ENCODE measurements at regions of chr2 and their contacts with region 1.

Region 1: DNA sequence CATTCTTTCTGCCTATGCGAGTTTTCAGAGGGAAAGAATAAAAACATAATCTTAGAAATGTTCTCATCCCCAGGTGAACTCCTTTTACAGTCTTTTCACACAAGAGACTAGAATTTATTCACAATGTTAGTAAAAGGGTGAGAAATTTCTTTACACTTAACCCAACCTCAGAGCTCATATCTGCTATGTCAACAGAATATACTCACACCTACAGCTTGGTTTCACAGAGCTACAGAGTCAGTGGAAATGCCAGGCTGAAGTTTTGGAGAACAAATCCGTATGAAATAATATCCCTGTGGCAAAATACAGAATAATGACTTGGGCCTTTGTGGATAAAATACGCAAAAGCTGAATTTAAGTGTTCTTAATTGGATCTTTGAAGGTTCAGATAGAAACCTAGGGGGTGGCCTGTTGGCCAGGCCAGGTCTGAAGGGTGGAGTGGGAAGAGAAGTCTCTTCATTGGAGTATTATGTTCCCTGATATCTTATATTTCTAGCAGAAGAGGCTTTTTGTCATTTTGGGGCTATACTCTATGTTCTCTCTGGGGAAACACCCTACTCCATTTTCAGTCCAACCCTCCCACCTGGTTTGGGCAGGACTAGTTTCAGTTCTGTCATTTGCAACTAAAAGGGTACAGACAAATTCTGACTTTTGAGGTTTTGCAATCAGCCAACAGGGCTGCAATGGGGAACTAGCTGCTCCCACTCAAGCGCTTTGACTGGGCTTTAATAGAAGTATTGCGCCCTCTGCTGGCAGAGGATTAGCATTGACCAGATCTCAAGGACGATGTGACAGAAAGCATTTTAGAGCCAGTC is 25.7 kb downstream of the FBXO48 start:
- DNase-seq: peak; percentile 68 to 82
- H3K4me3 ChIP-seq: no peak overlapping the region
- H3K27ac ChIP-seq: no peak overlapping the region
- H3K4me1 ChIP-seq: no peaks in the 10 kb centered on the region
- H3K27me3 ChIP-seq: no peaks in the 10 kb centered on the region
- CTCF ChIP-seq: peak; percentile 76 to 91 (median 83)
- POLR2A ChIP-seq: no peak

Region 2: DNA sequence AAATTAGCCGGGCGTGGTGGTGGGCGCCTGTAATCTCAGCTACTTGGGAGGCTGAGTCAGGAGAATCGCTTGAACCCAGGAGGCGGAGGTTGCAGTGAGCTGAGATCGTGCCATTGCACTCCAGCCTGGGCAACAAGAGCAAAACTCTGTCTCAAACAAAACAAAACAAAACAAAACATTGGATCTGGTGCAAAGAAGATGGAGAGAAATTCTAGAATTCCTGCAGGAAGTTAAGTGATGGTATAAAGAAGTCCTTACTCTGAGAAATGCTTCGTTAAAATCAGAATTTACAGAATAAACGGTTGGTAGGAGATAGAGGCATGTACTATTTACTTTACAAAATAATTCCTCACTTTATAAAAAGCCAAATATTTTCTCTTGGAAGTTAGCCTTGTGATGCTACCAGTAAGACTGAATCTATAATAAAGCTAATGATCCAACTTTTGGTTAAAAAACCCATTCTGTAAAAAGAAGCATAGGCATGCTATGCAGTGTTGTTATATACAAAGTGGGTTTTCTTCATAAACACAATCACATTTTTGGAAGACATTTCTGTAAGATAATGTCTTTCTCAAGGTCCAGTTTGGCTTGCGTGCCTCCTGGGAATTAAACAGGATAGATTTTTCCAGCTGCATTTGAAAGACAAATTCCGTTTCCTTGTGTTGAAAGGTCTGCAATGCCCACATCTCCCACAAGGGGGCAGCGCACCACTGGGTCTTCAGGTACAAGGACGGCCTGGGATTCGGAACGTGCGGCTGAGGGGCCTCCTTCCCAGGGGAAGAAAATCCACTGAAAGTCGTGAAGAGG is 319.3 kb before region 1 on chr2:
- intact Hi-C with region 1: loop called (anchors 5 kb)
- DNase-seq: peak; percentile 86 to 92
- H3K4me3 ChIP-seq: no peak overlapping the region
- H3K27ac ChIP-seq: no peak overlapping the region
- H3K4me1 ChIP-seq: no peaks in the 10 kb centered on the region
- H3K27me3 ChIP-seq: no peaks in the 10 kb centered on the region
- CTCF ChIP-seq: peak; percentile 71 to 97 (median 90)
- POLR2A ChIP-seq: no peak

Region 3: GRCh38 chr2:68828887-68829708 is 387.7 kb after region 1 on chr2:
- intact Hi-C with region 1: no loop called
- DNase-seq: peak; percentile 99
- H3K4me3 ChIP-seq: no peak overlapping the region
- H3K27ac ChIP-seq: peak overlapping the region; percentile 72 to 86 (median 85)
- H3K4me1 ChIP-seq: peaks cover 14 to 50% of the 10 kb centered on the region in 2 donors
- H3K27me3 ChIP-seq: no peaks in the 10 kb centered on the region
- CTCF ChIP-seq: peak in 2 of 6 experiments; percentile 8 to 15
- POLR2A ChIP-seq: no peak